ENCODE measurements at regions of chr17 and their contacts with region 1.

Region 1: DNA sequence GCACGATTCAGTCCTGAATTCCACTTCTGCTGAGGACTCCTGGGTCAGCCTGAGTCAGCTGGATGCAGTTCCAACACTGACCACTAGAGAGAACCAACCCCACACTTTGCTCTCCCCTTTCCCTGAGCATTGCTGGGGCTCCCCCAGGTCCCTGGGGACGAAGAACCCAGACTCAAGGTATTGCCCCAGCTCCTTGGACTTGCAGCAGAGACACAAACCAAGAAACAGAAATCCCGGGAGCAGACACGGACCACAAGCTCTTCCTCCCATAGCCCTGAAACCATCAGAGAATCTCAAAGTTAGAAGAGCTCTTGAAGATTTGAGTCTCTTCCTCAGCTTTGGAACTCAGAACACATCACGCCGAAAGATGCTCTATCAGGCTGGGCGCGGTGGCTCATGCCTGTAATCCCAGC is 678 bp upstream of the GH1 start:
- DNase-seq: peak; percentile 79
- ATAC-seq: peak; percentile 93
- H3K4me3 Mint-ChIP-seq: no peak overlapping the region
- H3K27ac Mint-ChIP-seq: peak overlapping the region; percentile 47
- H3K4me1 Mint-ChIP-seq: peaks cover 8% of the 10 kb centered on the region
- H3K27me3 Mint-ChIP-seq: peaks cover 16% of the 10 kb centered on the region

Region 2: DNA sequence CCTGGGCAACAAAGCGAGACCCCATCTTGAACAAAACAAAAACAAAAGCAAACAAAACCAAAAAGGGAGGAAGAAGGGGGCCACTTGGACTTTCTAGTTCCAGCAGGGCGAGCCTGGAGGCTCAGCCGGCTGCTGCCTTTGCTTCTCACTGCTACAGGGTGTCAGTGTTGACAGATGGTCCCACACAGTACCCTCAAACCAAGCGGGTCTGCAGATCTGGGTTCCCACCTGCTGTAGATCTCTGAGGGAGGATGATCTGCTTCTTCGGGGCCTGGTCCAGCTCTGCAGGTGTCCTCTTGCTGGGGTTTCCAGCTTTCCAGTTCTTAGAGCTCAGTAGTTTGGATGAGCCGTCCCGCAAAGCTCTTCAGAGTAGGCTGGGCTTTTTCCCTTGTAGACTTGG is 15.0 kb before region 1 on chr17:
- CTCF ChIA-PET with region 1: interaction called, 15 read pairs
- POLR2A ChIA-PET with region 1: no interaction called
- DNase-seq: no peak
- ATAC-seq: no peak
- H3K4me3 Mint-ChIP-seq: no peak overlapping the region
- H3K27ac Mint-ChIP-seq: no peak overlapping the region
- H3K4me1 Mint-ChIP-seq: peaks cover 6% of the 10 kb centered on the region
- H3K27me3 Mint-ChIP-seq: peaks cover 35% of the 10 kb centered on the region

Region 3: GRCh38 chr17:63946440-63947367 is 27.4 kb after region 1 on chr17:
- CTCF ChIA-PET with region 1: interaction called, 68 read pairs
- POLR2A ChIA-PET with region 1: no interaction called
- DNase-seq: peak; percentile 72
- ATAC-seq: peak; percentile 86
- H3K4me3 Mint-ChIP-seq: peak overlapping the region; percentile 36
- H3K27ac Mint-ChIP-seq: peak overlapping the region; percentile 62
- H3K4me1 Mint-ChIP-seq: peaks cover 22% of the 10 kb centered on the region
- H3K27me3 Mint-ChIP-seq: peaks cover 30% of the 10 kb centered on the region

Region 4: DNA sequence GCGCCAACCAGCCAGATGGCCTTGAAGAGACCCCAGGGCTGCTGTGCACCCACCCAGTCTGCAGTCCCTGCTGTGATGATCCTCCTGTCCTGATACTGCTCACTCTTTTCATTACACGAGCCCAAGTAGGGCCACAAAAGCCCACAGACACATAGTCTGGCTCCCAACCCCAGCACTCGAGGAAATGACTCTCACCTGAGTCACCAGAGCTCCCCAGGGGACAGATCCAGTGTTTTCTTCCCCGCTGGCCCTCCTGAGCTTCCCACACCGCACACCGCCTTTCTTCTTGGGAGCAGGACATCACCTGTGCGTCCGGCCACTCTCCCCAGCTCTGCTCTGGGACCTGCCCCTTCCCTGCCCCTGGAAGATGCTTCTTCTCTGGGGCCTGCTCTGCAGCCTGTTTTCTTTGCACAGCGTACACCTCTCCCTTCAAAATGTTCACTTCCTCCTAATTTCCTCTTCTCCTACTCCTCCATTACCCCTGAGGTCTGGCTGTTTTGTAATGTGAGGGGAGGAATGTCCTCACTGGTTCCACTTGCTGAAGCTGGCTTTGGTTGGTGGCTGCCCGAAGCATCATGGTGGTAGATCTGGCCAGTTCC is 55.4 kb after region 1 on chr17:
- CTCF ChIA-PET with region 1: interaction called, 14 read pairs
- POLR2A ChIA-PET with region 1: no interaction called
- DNase-seq: no peak
- ATAC-seq: no peak
- H3K4me3 Mint-ChIP-seq: no peak overlapping the region
- H3K27ac Mint-ChIP-seq: no peak overlapping the region
- H3K4me1 Mint-ChIP-seq: peaks cover 8% of the 10 kb centered on the region
- H3K27me3 Mint-ChIP-seq: peaks cover 17% of the 10 kb centered on the region

Region 5: GRCh38 chr17:63998050-63998720 is 78.9 kb after region 1 on chr17 and contains the start of gene PRR29:
- CTCF ChIA-PET with region 1: interaction called, 78 read pairs
- POLR2A ChIA-PET with region 1: no interaction called
- DNase-seq: peak; percentile 79
- ATAC-seq: peak; percentile 83
- H3K4me3 Mint-ChIP-seq: peak within 1 kb of the TSS; percentile 84
- H3K27ac Mint-ChIP-seq: peak within 1 kb of the TSS; percentile 82
- H3K4me1 Mint-ChIP-seq: peaks cover 51% of the 10 kb centered on the region
- H3K27me3 Mint-ChIP-seq: peaks cover 18% of the 10 kb centered on the region
- total RNA-seq, gene PRR29: 0.97 to 1.3 TPM

Region 6: DNA sequence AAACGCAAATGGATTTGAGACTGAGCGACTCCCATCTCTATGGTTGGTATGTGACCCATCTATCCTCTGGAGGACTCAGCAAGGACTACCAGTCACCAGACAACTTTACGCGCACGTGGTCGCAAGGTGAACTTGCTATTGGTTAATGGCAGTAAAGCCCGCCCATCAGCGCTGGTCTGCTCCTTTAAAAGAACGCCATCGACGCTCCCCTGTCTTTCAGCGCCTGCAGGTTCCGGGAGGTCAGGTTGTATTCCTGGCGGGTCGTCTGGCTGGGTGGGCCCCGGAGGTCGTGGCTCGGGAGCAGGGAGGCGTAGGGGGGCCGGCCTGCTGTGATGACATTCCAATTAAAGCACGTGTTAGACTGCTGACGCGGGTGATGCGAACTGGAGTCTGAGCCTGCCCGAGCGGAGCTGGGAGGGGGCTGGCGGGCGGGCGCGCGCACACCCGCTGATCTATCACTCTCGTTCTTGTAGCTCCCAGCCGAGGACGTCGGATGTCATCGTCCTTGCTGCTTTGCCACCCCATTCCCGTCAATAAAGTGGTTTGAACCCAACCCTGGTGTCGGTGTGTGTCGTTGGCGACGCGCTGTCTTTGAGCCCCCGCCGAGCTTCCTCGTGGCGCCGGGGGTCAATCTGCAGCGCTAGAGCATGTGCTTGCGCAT is 226.6 kb after region 1 on chr17:
- CTCF ChIA-PET with region 1: interaction called, 13 read pairs
- POLR2A ChIA-PET with region 1: no interaction called
- DNase-seq: peak; percentile 98
- ATAC-seq: peak; percentile 96
- H3K4me3 Mint-ChIP-seq: no peak overlapping the region
- H3K27ac Mint-ChIP-seq: no peak overlapping the region
- H3K4me1 Mint-ChIP-seq: peaks cover 26% of the 10 kb centered on the region
- H3K27me3 Mint-ChIP-seq: no peaks in the 10 kb centered on the region

Region 7: GRCh38 chr17:64190488-64190887 is 271.2 kb after region 1 on chr17:
- CTCF ChIA-PET with region 1: no interaction called
- POLR2A ChIA-PET with region 1: no interaction called
- DNase-seq: no peak
- ATAC-seq: no peak
- H3K4me3 Mint-ChIP-seq: no peak overlapping the region
- H3K27ac Mint-ChIP-seq: no peak overlapping the region
- H3K4me1 Mint-ChIP-seq: no peaks in the 10 kb centered on the region
- H3K27me3 Mint-ChIP-seq: no peaks in the 10 kb centered on the region